ENCODE measurements at regions of chr10 and their contacts with region 1.

Region 1: DNA sequence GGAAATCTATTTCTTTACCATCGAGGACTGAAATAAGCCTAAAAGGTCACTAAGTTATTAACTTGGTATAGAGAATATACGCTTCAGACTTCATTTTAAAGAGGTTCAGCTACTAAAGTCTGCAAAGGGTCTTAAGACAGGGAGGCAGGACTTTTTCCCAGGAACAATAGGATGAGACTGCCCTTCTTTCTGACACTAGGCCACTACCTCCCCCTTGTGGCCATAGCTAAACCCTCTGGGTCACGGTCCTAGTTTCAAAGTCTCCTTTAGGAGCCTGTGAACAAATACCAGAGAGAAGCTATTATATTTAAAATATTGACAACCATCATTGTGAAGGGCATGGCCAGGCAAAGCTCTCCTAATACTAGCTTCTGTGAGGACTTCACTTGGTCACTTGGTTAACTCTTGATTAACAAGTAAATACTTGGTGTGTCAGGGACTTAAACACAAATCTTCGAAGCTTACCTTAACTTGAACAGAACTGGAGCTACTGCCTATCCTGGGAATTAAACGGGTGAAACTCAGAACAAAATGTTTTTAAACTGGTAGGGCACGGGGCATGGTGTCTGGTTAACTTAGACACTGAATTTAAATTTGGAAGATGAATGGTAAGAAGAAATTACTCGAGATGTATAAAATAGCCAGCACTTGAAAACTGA is 75.6 kb downstream of the CCDC6 start:
- DNase-seq: peak; percentile 59
- H3K4me3 ChIP-seq: no peak overlapping the region; a peak in 1 of 4 replicates
- H3K27ac ChIP-seq: no peak overlapping the region
- H3K4me1 ChIP-seq: no peaks in the 10 kb centered on the region; a peak in 1 of 4 replicates
- H3K27me3 ChIP-seq: no peaks in the 10 kb centered on the region
- CTCF ChIP-seq: peak; percentile 90
- EP300 ChIP-seq: no peak
- RAD21 ChIP-seq: peak; percentile 76

Region 2: DNA sequence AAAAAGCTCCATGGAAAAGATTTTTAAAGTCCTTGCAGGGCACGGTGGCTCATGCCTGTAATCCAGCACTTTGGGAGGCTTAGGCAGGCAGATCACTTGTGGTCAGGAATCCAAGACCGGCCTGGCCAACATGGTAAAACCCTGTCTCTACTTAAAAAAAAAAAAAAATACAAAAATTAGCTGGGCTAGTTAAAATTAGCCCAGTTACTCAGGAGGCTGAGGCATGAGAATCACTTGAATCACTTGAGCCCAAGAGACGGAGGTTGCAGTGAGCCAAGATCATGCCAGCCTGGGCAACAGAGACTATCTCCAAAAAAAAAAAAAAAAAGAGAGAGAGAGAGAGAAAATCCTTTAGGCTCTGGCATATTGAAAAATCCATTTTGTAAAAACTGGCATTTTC is 13.7 kb after region 1 on chr10:
- CTCF ChIA-PET with region 1: interaction called, 31 read pairs
- POLR2A ChIA-PET with region 1: no interaction called
- DNase-seq: no peak
- H3K4me3 ChIP-seq: no peak overlapping the region
- H3K27ac ChIP-seq: no peak overlapping the region
- H3K4me1 ChIP-seq: no peaks in the 10 kb centered on the region
- H3K27me3 ChIP-seq: no peaks in the 10 kb centered on the region
- CTCF ChIP-seq: no peak
- EP300 ChIP-seq: no peak
- RAD21 ChIP-seq: no peak